HCT116 (cell line): ENCODE measurements at regions of chr6 and their contacts with region 1.

Region 1: GRCh38 chr6:15245361-15246216 is at the start of gene JARID2:
- DNase-seq: peak; percentile 95
- ATAC-seq: peak; percentile 76
- H3K4me3 ChIP-seq: peak within 1 kb of the TSS; percentile 72 to 81
- H3K27ac ChIP-seq: peak within 1 kb of the TSS; percentile 88
- H3K4me1 ChIP-seq: peaks cover 7 to 31% of the 10 kb centered on the region in 2 experiments
- H3K27me3 ChIP-seq: no peaks in the 10 kb centered on the region
- CTCF ChIP-seq: no peak
- POLR2A ChIP-seq: peak; percentile 42
- RAD21 ChIP-seq: peak; percentile 36
- total RNA-seq, gene JARID2: 23.6 TPM

Region 2: GRCh38 chr6:14270925-14271791 is 974.4 kb before region 1 on chr6:
- CTCF ChIA-PET with region 1: no interaction called
- POLR2A ChIA-PET with region 1: no interaction called
- RAD21 ChIA-PET with region 1: no interaction called
- intact Hi-C with region 1: loop called (anchors 5 kb)
- DNase-seq: peak; percentile 99
- ATAC-seq: peak; percentile 93
- H3K4me3 ChIP-seq: peak overlapping the region in 1 of 2 experiments; percentile 25; a peak in 2 of 4 replicates
- H3K27ac ChIP-seq: peak overlapping the region; percentile 72
- H3K4me1 ChIP-seq: peaks cover 26 to 52% of the 10 kb centered on the region in 2 experiments
- H3K27me3 ChIP-seq: no peaks in the 10 kb centered on the region
- CTCF ChIP-seq: no peak
- POLR2A ChIP-seq: no peak
- RAD21 ChIP-seq: peak; percentile 41

Region 3: GRCh38 chr6:14743465-14744211 is 502.0 kb before region 1 on chr6:
- CTCF ChIA-PET with region 1: no interaction called
- POLR2A ChIA-PET with region 1: no interaction called
- RAD21 ChIA-PET with region 1: interaction called in 1 of 2 experiments, 3 read pairs
- intact Hi-C with region 1: loop called (anchors 5 kb)
- DNase-seq: peak; percentile 94
- ATAC-seq: peak; percentile 95
- H3K4me3 ChIP-seq: peak overlapping the region in 1 of 2 experiments; percentile 33; a peak in 2 of 4 replicates
- H3K27ac ChIP-seq: peak overlapping the region; percentile 94
- H3K4me1 ChIP-seq: peaks cover 18 to 36% of the 10 kb centered on the region in 2 experiments
- H3K27me3 ChIP-seq: no peaks in the 10 kb centered on the region
- CTCF ChIP-seq: no peak
- POLR2A ChIP-seq: no peak
- RAD21 ChIP-seq: peak; percentile 19; the same call in 1 of the 2 replicates

Region 4: DNA sequence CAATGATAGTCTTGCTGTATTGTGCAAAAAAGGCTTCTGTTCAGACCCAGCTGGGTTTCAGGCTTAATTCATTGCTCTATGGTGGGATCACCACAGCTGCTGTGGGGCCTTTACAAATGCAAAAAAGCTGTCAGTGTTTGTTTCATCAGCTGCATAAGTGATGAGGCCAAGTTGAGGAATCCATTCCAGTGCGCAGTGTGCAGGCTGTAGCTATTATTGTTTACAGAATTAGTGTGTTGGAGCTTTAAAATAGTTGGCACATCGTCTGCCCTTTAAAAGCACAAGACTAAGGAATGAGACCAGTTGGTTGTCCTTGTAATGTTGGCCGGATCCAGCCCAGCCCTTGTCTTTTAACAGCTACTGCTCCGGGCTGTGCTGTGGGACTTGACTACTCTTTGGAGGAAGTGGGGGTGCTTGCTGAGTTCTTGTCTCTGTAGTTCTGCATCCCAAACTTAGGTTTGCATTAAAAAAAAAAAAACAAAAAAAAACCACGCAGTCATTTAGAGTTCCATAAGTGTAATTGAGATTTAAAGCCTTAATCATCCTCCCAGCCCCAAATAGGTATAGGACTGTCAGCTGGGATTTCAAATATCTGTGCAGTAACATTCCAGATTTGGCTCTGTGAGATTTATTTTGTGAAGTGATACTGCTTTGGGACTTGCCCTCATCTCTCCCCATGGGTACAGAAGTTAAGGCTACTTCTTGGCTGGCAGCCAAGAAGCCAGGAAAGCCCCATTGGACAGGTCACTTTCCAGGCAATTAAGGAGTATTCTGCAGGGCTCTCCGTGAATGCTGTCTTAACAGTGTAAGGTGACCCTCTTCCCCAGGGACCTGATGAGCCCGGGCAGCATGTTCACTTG is 19.5 kb after region 1 on chr6:
- CTCF ChIA-PET with region 1: no interaction called
- POLR2A ChIA-PET with region 1: no interaction called
- RAD21 ChIA-PET with region 1: no interaction called
- intact Hi-C with region 1: no loop called
- DNase-seq: no peak
- ATAC-seq: no peak
- H3K4me3 ChIP-seq: no peak overlapping the region
- H3K27ac ChIP-seq: no peak overlapping the region
- H3K4me1 ChIP-seq: peaks cover 0 to 9% of the 10 kb centered on the region in 2 experiments; a peak in 1 of 4 replicates
- H3K27me3 ChIP-seq: no peaks in the 10 kb centered on the region
- CTCF ChIP-seq: no peak
- POLR2A ChIP-seq: no peak
- RAD21 ChIP-seq: no peak

Region 5: GRCh38 chr6:15389765-15390723 is 144.5 kb after region 1 on chr6:
- CTCF ChIA-PET with region 1: interaction called, 3 read pairs
- POLR2A ChIA-PET with region 1: no interaction called
- RAD21 ChIA-PET with region 1: no interaction called
- intact Hi-C with region 1: loop called (anchors 5 kb)
- DNase-seq: peak; percentile 7
- ATAC-seq: peak; percentile 86
- H3K4me3 ChIP-seq: no peak overlapping the region
- H3K27ac ChIP-seq: no peak overlapping the region
- H3K4me1 ChIP-seq: no peaks in the 10 kb centered on the region
- H3K27me3 ChIP-seq: no peaks in the 10 kb centered on the region
- CTCF ChIP-seq: peak; percentile 43 to 72 (median 57); a peak in 5 of 6 replicates
- POLR2A ChIP-seq: no peak
- RAD21 ChIP-seq: peak; percentile 78

Region 6: GRCh38 chr6:15453622-15454021 is 208.0 kb after region 1 on chr6:
- CTCF ChIA-PET with region 1: no interaction called
- POLR2A ChIA-PET with region 1: no interaction called
- RAD21 ChIA-PET with region 1: no interaction called
- intact Hi-C with region 1: loop called (anchors 5 kb)
- DNase-seq: no peak
- ATAC-seq: no peak
- H3K4me3 ChIP-seq: no peak overlapping the region
- H3K27ac ChIP-seq: no peak overlapping the region
- H3K4me1 ChIP-seq: peaks cover 16 to 28% of the 10 kb centered on the region in 2 experiments
- H3K27me3 ChIP-seq: no peaks in the 10 kb centered on the region
- CTCF ChIP-seq: no peak
- POLR2A ChIP-seq: no peak
- RAD21 ChIP-seq: no peak

Region 7: DNA sequence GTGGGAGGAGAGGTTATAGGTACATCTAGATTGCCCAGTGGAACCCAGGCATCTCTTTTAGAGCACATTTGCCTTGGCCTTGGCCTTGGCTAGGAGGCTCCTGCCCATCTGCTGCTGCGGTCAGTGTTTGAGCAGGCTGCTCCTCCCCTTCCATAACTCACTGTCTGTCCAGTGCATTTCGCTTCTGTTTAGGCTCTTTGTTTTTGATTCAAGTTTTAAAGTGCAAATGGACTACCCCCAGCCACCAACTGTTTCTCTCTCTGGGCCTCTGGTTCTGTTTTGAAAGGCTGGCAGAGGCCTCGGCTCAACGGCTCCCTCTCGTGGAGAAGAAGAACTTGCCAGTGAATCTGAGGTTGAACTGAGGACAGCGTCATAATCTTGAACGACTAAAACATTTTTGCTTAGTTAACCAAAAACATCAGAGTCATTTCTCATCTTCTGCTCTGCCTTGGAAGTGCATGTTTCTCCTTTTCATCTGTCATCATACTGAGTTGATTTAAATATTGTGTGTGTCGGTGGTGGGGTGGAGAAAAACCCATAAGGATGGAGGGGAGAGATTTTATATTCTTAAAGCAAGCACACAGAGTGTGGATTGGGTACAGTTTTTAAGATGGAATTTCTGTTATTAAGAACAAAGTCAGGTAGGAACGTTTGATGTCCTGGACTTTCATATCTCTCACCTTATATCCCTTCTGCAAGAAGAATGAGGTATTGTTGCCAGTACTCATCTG is 245.8 kb after region 1 on chr6:
- CTCF ChIA-PET with region 1: no interaction called
- POLR2A ChIA-PET with region 1: no interaction called
- RAD21 ChIA-PET with region 1: no interaction called
- intact Hi-C with region 1: loop called (anchors 5 kb)
- DNase-seq: peak; percentile 21
- ATAC-seq: peak; percentile 82
- H3K4me3 ChIP-seq: no peak overlapping the region
- H3K27ac ChIP-seq: no peak overlapping the region
- H3K4me1 ChIP-seq: no peaks in the 10 kb centered on the region
- H3K27me3 ChIP-seq: no peaks in the 10 kb centered on the region
- CTCF ChIP-seq: peak; percentile 52 to 96 (median 92); a peak in 5 of 6 replicates
- POLR2A ChIP-seq: no peak
- RAD21 ChIP-seq: peak; percentile 79

Region 8: GRCh38 chr6:15555101-15556038 is 309.8 kb after region 1 on chr6:
- CTCF ChIA-PET with region 1: no interaction called
- POLR2A ChIA-PET with region 1: no interaction called
- RAD21 ChIA-PET with region 1: no interaction called
- intact Hi-C with region 1: no loop called
- DNase-seq: no peak
- ATAC-seq: no peak
- H3K4me3 ChIP-seq: no peak overlapping the region
- H3K27ac ChIP-seq: no peak overlapping the region
- H3K4me1 ChIP-seq: peaks cover 0 to 7% of the 10 kb centered on the region in 2 experiments; a peak in 1 of 4 replicates
- H3K27me3 ChIP-seq: no peaks in the 10 kb centered on the region
- CTCF ChIP-seq: no peak
- POLR2A ChIP-seq: no peak
- RAD21 ChIP-seq: no peak